ENCODE measurements at regions of chr18 and their contacts with region 1.

Region 1: DNA sequence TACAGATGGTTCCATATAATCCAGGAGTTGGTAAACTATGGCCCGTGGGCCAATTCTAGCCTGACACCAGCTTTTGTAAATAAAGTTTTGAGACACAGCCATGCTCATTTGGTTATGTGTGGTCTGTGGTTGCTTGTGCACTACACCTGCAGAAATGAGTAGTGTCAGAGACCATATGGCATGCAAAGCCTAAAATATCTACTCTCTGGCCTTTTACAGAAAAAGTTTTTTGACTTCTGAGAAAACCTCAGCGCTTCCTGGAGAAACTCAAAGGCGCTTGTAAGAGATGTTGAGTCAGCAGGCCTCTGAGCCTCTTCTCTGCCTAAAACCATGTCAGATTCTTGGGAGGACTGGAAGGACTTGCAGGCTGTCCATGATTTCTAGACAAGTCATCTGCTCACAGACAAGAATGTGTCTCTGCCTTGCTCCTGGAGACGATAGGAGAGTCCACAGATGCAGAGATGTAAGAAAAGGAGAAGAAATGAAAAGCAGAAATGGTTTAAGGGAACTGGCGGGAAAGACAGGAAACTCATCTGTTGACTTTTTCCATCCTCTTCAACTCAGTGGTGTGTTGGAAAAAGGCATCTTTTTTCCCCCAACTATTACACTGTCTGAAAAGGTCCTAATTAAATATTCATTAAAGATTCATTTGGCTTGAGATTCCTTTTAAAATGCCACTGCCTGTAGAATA is 5.2 kb downstream of the TTC39C start:
- DNase-seq: peak; percentile 71
- H3K4me3 Mint-ChIP-seq: peak overlapping the region; percentile 80
- H3K27ac Mint-ChIP-seq: peak overlapping the region; percentile 92
- H3K4me1 Mint-ChIP-seq: peaks cover 90% of the 10 kb centered on the region
- H3K27me3 Mint-ChIP-seq: no peaks in the 10 kb centered on the region

Region 2: DNA sequence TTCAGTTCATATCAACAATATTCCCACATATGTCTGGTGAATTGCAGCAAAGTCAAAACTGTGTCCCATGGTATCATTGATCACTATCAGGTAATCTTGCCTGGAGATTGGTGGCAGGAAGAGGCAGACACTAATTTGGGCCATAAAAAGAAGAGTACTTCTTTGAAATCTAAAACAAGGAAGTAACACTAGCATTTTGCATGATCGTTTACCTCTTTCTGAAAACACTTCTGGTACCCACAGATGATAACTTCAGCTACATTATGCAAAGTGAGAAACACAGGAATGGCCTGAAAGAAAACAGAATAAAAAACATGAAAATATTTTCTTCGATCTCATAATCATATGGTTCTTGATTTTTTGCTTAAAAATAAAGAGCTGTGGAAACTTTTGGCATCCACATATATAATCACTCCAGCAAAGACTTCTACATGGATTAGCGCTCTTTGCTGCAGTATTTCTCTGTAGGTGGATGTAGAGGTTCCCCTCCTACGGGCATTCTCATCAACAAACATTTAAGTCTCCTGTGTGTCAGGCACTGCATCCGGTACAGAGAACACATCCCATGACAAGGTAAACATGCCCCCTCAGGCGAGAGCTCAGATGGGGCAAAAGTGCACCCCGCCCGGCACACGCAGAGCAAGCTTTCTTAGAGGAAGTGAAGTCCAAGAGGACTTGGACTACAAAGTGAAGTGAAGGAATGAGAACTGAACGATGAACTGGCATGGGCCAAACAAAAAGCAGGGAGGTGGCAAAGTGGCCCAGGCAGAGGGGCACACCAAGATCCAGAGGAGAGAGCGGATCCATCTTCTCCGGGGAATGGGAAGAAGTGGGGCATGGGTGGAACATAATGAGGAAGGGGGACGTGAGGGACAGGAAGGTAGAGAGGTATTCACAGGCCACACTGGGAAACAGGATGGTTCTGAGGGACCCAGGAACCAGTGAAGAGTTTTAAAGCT is 634.7 kb before region 1 on chr18:
- intact Hi-C with region 1: no loop called
- DNase-seq: no peak
- H3K4me3 Mint-ChIP-seq: peak overlapping the region; percentile 12
- H3K27ac Mint-ChIP-seq: peak overlapping the region; percentile 41
- H3K4me1 Mint-ChIP-seq: peaks cover 15% of the 10 kb centered on the region
- H3K27me3 Mint-ChIP-seq: peaks cover 1% of the 10 kb centered on the region

Region 3: DNA sequence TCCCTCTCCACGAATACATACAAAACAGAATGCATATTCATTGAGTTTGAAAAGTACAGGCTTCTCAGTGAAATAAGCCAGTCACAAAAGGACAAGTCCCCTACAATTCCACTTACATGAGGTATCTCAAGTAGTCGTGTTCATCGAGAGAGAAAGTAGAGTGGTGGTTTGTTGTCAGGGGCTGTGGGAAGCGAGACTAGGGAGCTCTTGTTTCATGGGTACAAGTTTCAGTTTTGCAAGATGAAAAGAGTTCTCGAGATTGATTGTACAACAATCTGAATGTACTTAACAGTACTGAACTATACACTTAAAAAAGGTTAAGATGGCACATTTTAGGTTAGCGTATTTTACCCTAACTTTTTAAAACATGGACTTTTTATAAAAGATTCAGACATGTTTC is 76.7 kb before region 1 on chr18:
- intact Hi-C with region 1: loop called (anchors 2 kb)
- DNase-seq: no peak
- H3K4me3 Mint-ChIP-seq: peak overlapping the region; percentile 3
- H3K27ac Mint-ChIP-seq: no peak overlapping the region
- H3K4me1 Mint-ChIP-seq: peaks cover 26% of the 10 kb centered on the region
- H3K27me3 Mint-ChIP-seq: peaks cover 33% of the 10 kb centered on the region